Gastrocnemius medialis (tissue), 4 donors: ENCODE measurements at regions of chr17 and their contacts with region 1.

Region 1: DNA sequence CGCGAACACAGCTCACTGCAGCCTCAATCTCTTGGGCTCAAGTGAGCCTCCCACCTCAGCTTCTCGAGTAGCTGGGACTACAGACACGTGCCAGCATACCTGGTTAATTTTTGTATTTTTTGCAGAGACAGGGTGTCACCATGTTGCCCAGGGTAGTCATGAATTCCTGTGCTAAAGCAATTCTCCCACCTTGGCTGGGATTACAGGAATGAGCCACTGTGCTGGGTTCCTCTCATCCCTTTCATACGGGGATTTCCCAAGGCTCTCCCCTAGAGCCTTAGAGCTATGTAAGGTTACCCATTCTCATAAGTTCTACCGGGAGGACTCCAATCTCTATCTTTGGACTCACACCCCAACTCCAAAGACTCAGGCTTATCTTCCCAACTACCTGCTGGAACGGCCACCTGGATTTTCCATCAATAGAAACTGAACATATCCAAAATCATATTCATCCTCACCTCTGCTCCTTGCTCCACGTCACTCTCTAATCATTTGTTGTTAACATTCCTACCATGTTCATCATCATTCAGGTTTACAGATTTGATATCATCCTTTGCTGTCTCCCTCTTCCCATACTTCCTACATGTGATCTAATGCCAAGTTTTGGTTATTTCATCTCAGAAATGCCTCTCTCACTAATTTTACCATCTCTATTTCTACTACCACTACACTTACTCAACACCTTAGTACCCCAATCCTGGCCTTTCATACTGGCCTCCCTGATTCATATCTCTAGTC is 92.5 kb downstream of the NCOR1 start:
- DNase-seq: no peak
- ATAC-seq: no peak
- H3K4me3 ChIP-seq: no peak overlapping the region
- H3K27ac ChIP-seq: peak overlapping the region in 3 of 4 donors; percentile 31 to 62 (median 41)
- H3K4me1 ChIP-seq: peaks cover 0 to 13% of the 10 kb centered on the region in 2 donors
- H3K27me3 ChIP-seq: no peaks in the 10 kb centered on the region
- CTCF ChIP-seq: no peak
- POLR2A ChIP-seq: no peak

Region 2: GRCh38 chr17:16189791-16190348 is 67.0 kb after region 1 on chr17:
- in situ Hi-C with region 1: loop called in 1 of 4 experiments (anchors 10 kb)
- intact Hi-C with region 1: no loop called
- DNase-seq: no peak
- ATAC-seq: peak in 1 of 2 donors; percentile 35
- H3K4me3 ChIP-seq: no peak overlapping the region
- H3K27ac ChIP-seq: peak overlapping the region; percentile 2 to 63 (median 48)
- H3K4me1 ChIP-seq: peaks cover 26 to 29% of the 10 kb centered on the region in 2 donors
- H3K27me3 ChIP-seq: no peaks in the 10 kb centered on the region
- CTCF ChIP-seq: no peak
- POLR2A ChIP-seq: no peak